ENCODE measurements at regions of chr3 and their contacts with region 1.

Region 1: GRCh38 chr3:30606301-30607031 is at the start of gene TGFBR2:
- DNase-seq: peak; percentile 98
- H3K4me3 ChIP-seq: peak within 1 kb of the TSS; percentile 97 to 100 (median 97)
- H3K27ac ChIP-seq: peak within 1 kb of the TSS; percentile 99
- H3K4me1 ChIP-seq: peaks cover 33% of the 10 kb centered on the region
- H3K27me3 ChIP-seq: no peaks in the 10 kb centered on the region
- CTCF ChIP-seq: peak; percentile 1 to 37
- total RNA-seq, gene TGFBR2: 149 to 179 TPM

Region 2: DNA sequence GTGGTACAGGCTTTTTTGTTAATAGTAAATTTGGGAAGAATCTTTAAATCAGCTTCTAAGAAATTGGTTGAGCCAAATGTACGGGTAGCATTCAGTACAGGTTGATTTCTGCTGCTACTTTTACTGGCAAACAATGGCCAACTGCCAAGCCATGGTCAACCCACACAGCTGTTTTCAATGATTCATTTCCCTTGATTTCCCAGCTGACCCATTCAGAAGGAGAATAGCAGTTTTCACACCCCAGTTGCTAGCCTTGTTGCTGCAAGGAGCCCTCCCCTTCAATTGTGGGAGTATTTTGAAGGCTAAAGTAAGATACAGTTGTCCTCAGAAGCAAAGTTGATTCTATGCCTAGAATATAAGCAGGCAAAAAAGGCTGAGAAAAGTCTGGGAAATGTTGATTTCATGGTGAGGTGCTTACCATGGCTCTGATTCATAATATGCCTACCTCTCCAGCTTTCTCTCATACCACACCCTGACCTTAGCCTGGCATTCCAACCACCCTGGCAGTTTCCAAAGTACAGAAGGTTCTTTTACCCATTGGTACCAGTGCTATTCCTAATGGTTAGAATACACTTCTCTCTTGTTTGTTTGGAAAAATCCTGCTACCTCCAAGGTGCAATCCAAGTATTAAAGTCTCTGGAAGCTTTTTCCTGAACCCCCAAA is 320.3 kb before region 1 on chr3:
- CTCF ChIA-PET with region 1: no interaction called
- dilution Hi-C with region 1: no loop called
- in situ Hi-C with region 1: no loop called
- intact Hi-C with region 1: loop called (anchors 10 kb)
- DNase-seq: peak; percentile 93
- H3K4me3 ChIP-seq: no peak overlapping the region
- H3K27ac ChIP-seq: peak overlapping the region; percentile 87
- H3K4me1 ChIP-seq: peaks cover 60% of the 10 kb centered on the region
- H3K27me3 ChIP-seq: no peaks in the 10 kb centered on the region
- CTCF ChIP-seq: no peak

Region 3: GRCh38 chr3:30347679-30348216 is 258.7 kb before region 1 on chr3:
- CTCF ChIA-PET with region 1: interaction called, 4 read pairs
- dilution Hi-C with region 1: no loop called
- in situ Hi-C with region 1: loop called in 1 of 2 experiments (anchors 25 kb)
- intact Hi-C with region 1: loop called (anchors 2 kb)
- DNase-seq: peak; percentile 93
- H3K4me3 ChIP-seq: no peak overlapping the region
- H3K27ac ChIP-seq: peak overlapping the region; percentile 92
- H3K4me1 ChIP-seq: peaks cover 78% of the 10 kb centered on the region
- H3K27me3 ChIP-seq: no peaks in the 10 kb centered on the region
- CTCF ChIP-seq: no peak

Region 4: GRCh38 chr3:30511524-30512278 is 94.8 kb before region 1 on chr3:
- CTCF ChIA-PET with region 1: no interaction called
- dilution Hi-C with region 1: no loop called
- in situ Hi-C with region 1: loop called (anchors 5 to 10 kb)
- intact Hi-C with region 1: loop called (anchors 1 kb)
- DNase-seq: peak; percentile 97
- H3K4me3 ChIP-seq: peak overlapping the region in 1 of 3 experiments; percentile 6
- H3K27ac ChIP-seq: peak overlapping the region; percentile 93
- H3K4me1 ChIP-seq: peaks cover 34% of the 10 kb centered on the region
- H3K27me3 ChIP-seq: no peaks in the 10 kb centered on the region
- CTCF ChIP-seq: no peak

Region 5: DNA sequence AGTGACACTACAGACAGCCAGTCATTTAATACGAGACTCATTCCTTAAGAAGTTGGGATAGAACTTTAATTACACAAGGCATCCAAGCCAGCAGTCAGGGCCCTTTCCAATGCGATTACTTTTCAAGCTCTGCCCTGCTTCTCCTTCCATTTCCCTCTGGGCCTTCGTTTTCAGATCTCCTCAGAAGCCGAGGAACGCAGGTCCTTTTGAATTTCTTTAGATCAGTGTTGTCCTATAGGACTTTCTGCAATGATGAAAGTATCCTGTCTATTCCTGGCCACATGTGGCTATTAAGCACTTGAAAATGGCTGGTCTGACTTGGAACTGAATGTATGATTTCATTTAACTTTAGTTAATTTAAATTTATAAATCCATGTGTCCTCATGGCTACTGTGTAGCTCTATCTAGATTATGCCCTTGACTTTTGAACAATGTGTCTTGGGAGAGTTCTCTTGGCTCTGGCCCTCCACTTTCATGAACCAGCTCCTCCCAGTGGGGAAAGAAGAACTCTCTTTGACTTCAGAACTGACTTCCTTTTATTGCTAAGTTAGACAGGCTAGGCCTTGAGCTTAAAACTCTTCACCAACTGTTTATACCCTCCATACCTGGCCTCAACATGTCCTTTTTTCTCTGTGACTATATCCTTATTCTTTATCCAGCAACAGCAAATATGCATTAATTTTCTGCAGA is 22.6 kb after region 1 on chr3:
- CTCF ChIA-PET with region 1: no interaction called
- dilution Hi-C with region 1: no loop called
- in situ Hi-C with region 1: no loop called
- intact Hi-C with region 1: loop called (anchors 1 kb)
- DNase-seq: no peak
- H3K4me3 ChIP-seq: no peak overlapping the region
- H3K27ac ChIP-seq: peak overlapping the region; percentile 30
- H3K4me1 ChIP-seq: peaks cover 83% of the 10 kb centered on the region
- H3K27me3 ChIP-seq: no peaks in the 10 kb centered on the region
- CTCF ChIP-seq: peak; percentile 11 to 53

Region 6: DNA sequence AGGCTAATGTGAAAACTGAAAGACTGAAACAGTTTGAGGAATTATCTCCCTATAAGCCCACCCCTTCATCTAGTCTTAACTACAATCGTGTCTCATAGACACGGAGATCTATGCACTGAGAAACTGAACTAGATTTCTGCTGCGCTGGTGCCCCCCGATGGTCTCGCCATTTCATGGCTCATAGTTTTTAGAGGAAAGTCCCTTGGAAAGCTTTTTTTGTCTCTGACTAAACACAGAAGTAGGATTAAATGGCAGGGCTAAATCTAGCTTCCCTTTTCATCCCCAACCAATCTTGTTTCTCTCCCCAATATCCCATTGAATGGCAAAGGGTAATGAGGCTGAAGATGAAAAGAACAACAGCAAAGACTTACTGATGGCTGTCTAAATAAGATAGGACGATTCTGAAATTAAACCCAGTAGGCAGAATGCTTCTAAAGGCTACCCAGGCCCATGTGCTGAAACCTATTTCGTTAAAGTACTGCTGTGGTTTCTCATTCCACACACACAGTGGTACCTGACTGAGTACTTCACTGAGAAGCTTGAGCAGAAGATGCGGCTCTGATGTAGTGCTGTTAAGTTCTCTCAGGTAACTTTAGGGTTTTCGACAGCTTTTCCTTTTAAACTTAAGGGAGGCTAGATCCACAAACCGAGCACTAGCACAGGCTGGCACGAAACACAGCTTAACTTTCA is 145.3 kb after region 1 on chr3:
- CTCF ChIA-PET with region 1: no interaction called
- dilution Hi-C with region 1: no loop called
- in situ Hi-C with region 1: no loop called
- intact Hi-C with region 1: loop called (anchors 5 kb)
- DNase-seq: peak; percentile 24
- H3K4me3 ChIP-seq: no peak overlapping the region
- H3K27ac ChIP-seq: no peak overlapping the region
- H3K4me1 ChIP-seq: peaks cover 31% of the 10 kb centered on the region
- H3K27me3 ChIP-seq: no peaks in the 10 kb centered on the region
- CTCF ChIP-seq: peak; percentile 19 to 22

Measured in mammary epithelial cell (primary cell).